IMR-90 (cell line): ENCODE measurements at regions of chr1 and their contacts with region 1.

Region 1: DNA sequence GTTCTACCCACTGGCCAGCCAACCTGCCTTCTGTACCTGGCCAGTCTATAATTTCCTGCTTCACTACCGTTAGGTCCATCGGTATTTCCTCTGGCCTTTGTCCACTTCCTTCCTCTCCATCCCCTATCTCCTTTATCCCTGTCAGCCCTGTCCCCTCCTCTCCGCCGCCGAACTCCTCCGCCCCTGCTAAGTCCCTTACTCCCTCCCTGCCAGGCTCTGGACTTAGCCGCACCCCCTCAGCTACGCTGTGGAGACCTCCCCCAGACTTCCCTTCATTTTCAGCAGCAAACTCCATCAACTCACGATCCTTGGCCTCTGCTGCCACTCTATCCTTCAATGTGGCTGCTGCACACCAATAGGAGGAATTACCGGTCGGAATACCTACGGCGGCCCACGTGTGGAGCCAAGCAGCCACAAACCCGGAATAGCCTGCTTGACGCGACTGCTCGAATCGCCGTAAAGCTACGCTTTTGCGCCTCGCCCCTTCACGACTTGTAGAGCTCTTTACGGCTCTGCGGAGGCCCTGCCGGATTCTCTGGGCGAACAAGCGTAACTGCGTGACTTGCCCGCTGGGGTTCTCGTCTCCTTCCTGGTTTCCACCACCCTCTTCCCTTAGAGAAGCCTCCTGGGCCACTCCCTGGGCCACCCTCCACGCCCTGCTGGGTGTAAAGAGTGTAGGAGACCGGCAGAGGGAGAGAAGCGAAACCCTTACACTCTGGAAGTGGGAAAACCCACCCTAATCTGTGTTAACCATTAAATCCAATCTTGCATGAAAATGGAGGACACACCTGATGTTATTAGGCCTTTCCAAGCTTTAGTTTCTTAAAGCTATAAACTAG is at the start of gene ZNHIT6:
- DNase-seq: peak; percentile 98
- ATAC-seq: peak; percentile 96
- H3K4me3 ChIP-seq: peak within 1 kb of the TSS; percentile 90
- H3K27ac ChIP-seq: peak within 1 kb of the TSS; percentile 89
- H3K4me1 ChIP-seq: peaks cover 1% of the 10 kb centered on the region; the same call in 1 of the 2 replicates
- H3K27me3 ChIP-seq: no peaks in the 10 kb centered on the region
- CTCF ChIP-seq: peak; percentile 45
- POLR2A ChIP-seq: peak; percentile 37; the same call in 1 of the 2 replicates
- RAD21 ChIP-seq: peak; percentile 50
- total RNA-seq, gene ZNHIT6: 9.0 and 17.2 TPM in 2 replicates

Region 2: DNA sequence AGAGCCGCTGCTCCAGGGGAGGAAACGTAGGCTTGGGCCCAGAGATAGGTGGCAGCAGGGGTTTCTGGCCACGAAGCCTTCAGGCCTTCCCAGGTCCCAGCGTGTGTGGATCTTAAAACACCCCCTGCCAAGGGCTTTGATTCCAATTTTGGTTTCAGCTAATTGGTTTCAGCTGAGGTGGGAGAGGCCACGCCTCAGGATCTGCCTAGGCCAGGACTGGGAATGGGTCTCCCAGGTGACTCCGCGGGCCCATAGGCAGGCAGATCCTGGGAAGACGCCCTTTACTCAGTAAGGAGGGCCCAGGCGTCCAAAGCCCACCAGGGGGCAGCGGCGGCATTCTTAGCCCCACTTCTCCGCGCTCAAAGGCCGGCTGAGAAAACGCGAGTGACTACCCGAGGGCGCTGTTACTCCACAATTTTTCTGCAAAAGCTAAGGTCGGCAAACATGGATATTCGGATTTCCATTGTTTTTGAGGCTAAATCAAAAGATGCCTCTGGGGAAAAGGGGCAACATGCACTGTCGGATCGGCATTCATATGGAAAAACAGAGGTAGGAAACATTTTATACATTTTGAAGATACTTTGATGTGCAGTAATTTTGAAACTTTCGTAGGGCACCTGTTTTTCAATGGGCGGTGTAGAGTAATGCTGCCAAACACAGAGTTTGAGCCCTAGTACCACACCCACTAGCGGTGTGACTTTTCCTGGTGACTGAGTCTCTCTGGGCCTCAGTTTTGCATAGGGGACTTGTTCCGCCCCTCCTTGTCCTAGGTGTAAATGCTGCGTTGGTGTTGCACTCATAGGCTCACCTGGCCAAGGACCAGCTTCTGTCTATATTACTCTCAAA is 400.0 kb before region 1 on chr1:
- CTCF ChIA-PET with region 1: no interaction called
- POLR2A ChIA-PET with region 1: no interaction called
- dilution Hi-C with region 1: no loop called
- in situ Hi-C with region 1: no loop called
- intact Hi-C with region 1: loop called (anchors 5 kb)
- DNase-seq: peak; percentile 84
- ATAC-seq: peak; percentile 98
- H3K4me3 ChIP-seq: no peak overlapping the region
- H3K27ac ChIP-seq: peak overlapping the region; percentile 33; the same call in 1 of the 2 replicates
- H3K4me1 ChIP-seq: peaks cover 7% of the 10 kb centered on the region
- H3K27me3 ChIP-seq: no peaks in the 10 kb centered on the region
- CTCF ChIP-seq: peak; percentile 100; the same call in 1 of the 2 replicates
- POLR2A ChIP-seq: peak; percentile 65; the same call in 1 of the 2 replicates
- RAD21 ChIP-seq: peak; percentile 100

Region 3: DNA sequence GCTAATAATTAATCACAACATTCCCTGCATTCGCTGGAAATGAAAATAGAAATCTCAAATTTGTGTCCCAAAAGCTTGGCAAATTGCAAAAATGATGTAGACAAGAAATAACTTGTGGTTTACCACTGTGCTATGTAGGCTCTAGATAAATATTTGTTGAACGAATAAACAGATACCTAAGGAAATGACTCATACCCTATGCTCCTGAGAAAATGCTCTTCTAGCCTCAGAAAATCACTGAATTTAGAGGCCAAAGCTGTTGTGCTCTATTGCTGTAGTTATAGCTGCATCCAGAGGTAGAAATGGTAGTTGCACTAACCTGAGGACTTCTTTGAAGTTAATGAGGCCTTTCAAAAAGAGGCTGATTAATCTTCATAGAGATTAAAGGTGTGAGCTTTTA is 142.0 kb after region 1 on chr1:
- CTCF ChIA-PET with region 1: interaction called, 5 read pairs
- POLR2A ChIA-PET with region 1: interaction called, 3 read pairs
- dilution Hi-C with region 1: no loop called
- in situ Hi-C with region 1: no loop called
- intact Hi-C with region 1: loop called (anchors 1 kb)
- DNase-seq: peak; percentile 95
- ATAC-seq: peak; percentile 97
- H3K4me3 ChIP-seq: no peak overlapping the region
- H3K27ac ChIP-seq: no peak overlapping the region; the same call in 1 of the 2 replicates
- H3K4me1 ChIP-seq: peaks cover 4% of the 10 kb centered on the region; the same call in 1 of the 2 replicates
- H3K27me3 ChIP-seq: no peaks in the 10 kb centered on the region
- CTCF ChIP-seq: peak; percentile 54
- POLR2A ChIP-seq: no peak
- RAD21 ChIP-seq: peak; percentile 69

Region 4: DNA sequence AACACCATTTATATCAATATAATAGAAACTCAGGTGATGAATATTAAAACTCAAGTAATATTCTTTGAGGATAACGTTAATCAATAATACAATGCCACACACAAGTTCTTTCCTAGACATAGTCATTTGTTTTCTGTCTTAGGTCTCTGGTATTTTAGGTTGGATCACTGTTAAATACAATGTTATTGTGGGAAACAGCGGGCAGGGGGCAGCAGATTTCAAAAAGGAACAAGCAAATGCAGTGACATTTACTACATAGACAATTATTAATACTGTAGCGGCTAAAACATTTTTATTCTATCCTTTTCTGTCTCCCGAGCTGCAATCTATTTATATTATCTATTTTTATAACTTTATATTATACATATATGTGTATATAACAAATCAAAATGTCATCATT is 186.4 kb after region 1 on chr1:
- CTCF ChIA-PET with region 1: interaction called, 3 read pairs
- POLR2A ChIA-PET with region 1: no interaction called
- dilution Hi-C with region 1: no loop called
- in situ Hi-C with region 1: loop called (anchors 25 kb)
- intact Hi-C with region 1: no loop called
- DNase-seq: peak; percentile 46
- ATAC-seq: peak; percentile 76
- H3K4me3 ChIP-seq: no peak overlapping the region
- H3K27ac ChIP-seq: no peak overlapping the region
- H3K4me1 ChIP-seq: no peaks in the 10 kb centered on the region
- H3K27me3 ChIP-seq: no peaks in the 10 kb centered on the region
- CTCF ChIP-seq: peak; percentile 63
- POLR2A ChIP-seq: no peak
- RAD21 ChIP-seq: peak; percentile 62

Region 5: GRCh38 chr1:86156566-86157455 is 448.6 kb after region 1 on chr1 and contains the start of gene COL24A1:
- CTCF ChIA-PET with region 1: no interaction called
- POLR2A ChIA-PET with region 1: no interaction called
- dilution Hi-C with region 1: no loop called
- in situ Hi-C with region 1: no loop called
- intact Hi-C with region 1: loop called (anchors 5 kb)
- DNase-seq: peak; percentile 83
- ATAC-seq: peak; percentile 70
- H3K4me3 ChIP-seq: peak within 1 kb of the TSS; percentile 37
- H3K27ac ChIP-seq: peak within 1 kb of the TSS; percentile 83
- H3K4me1 ChIP-seq: peaks cover 22% of the 10 kb centered on the region
- H3K27me3 ChIP-seq: no peaks in the 10 kb centered on the region
- CTCF ChIP-seq: no peak
- POLR2A ChIP-seq: no peak
- RAD21 ChIP-seq: no peak
- total RNA-seq, gene COL24A1: 1.4 and 2.5 TPM in 2 replicates

Region 6: GRCh38 chr1:86704458-86704971 is 996.3 kb after region 1 on chr1 and contains the start of gene SH3GLB1:
- CTCF ChIA-PET with region 1: no interaction called
- POLR2A ChIA-PET with region 1: no interaction called
- dilution Hi-C with region 1: no loop called
- in situ Hi-C with region 1: loop called (anchors 25 kb)
- intact Hi-C with region 1: no loop called
- DNase-seq: peak; percentile 82
- ATAC-seq: peak; percentile 93
- H3K4me3 ChIP-seq: peak within 1 kb of the TSS; percentile 64
- H3K27ac ChIP-seq: peak within 1 kb of the TSS; percentile 90
- H3K4me1 ChIP-seq: no peaks in the 10 kb centered on the region; the same call in 1 of the 2 replicates
- H3K27me3 ChIP-seq: no peaks in the 10 kb centered on the region
- CTCF ChIP-seq: peak; percentile 85
- POLR2A ChIP-seq: peak; percentile 68
- RAD21 ChIP-seq: 0 out of 2 replicates have a peak, but pooled peaks have one; percentile 22
- total RNA-seq, gene SH3GLB1: 22.2 and 30.3 TPM in 2 replicates